B cell (primary cell): ENCODE measurements at regions of chr12 and their contacts with region 1.

Region 1: DNA sequence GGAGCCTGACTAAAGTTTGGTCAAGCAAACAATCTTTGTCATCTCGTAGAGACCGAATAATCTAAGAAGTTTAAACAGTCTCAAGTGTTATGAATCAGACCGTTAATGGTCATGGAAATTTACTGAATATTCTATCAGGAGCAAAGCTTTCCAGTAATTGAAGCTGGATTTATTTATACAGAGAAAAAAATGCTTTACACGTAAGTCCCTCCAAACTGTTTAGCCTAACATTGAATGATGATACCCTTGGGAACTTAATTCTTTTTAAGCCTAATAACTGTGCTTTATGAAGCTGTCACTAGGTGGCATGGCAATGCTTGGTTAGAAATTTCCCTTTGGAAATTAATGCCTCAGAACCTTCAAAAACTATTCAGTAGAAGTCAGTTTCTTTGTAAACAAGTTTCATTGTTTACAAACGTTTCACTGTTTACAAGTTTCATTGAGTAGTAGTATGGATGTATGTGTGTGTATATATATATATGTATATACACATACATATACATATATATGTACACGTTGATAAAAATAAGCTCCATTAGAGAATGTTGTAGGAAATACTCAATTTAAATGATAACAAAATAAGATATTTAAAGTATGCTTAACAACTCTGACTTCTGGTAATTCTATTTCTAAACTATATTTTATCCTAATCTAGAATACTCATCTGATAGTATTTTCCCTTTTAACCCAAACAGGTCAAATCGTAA is 32.1 kb downstream of the DEPDC4 start:
- DNase-seq: peak; percentile 34
- ATAC-seq: no peak
- H3K4me3 ChIP-seq: no peak overlapping the region
- H3K4me3 Mint-ChIP-seq: no peak overlapping the region
- H3K27ac ChIP-seq: no peak overlapping the region
- H3K27ac Mint-ChIP-seq: no peak overlapping the region
- H3K4me1 ChIP-seq: no peaks in the 10 kb centered on the region
- H3K4me1 Mint-ChIP-seq: no peaks in the 10 kb centered on the region
- H3K27me3 ChIP-seq: no peaks in the 10 kb centered on the region
- H3K27me3 Mint-ChIP-seq: no peaks in the 10 kb centered on the region
- CTCF ChIP-seq: peak; percentile 72

Region 2: GRCh38 chr12:100215209-100215608 is 19.5 kb before region 1 on chr12:
- CTCF ChIA-PET with region 1: no interaction called
- POLR2A ChIA-PET with region 1: no interaction called
- intact Hi-C with region 1: no loop called
- DNase-seq: no peak
- ATAC-seq: no peak
- H3K4me3 ChIP-seq: no peak overlapping the region
- H3K4me3 Mint-ChIP-seq: no peak overlapping the region
- H3K27ac ChIP-seq: no peak overlapping the region
- H3K27ac Mint-ChIP-seq: no peak overlapping the region
- H3K4me1 ChIP-seq: no peaks in the 10 kb centered on the region
- H3K4me1 Mint-ChIP-seq: peaks cover 3% of the 10 kb centered on the region
- H3K27me3 ChIP-seq: no peaks in the 10 kb centered on the region
- H3K27me3 Mint-ChIP-seq: no peaks in the 10 kb centered on the region
- CTCF ChIP-seq: no peak

Region 3: GRCh38 chr12:100672075-100672592 is 437.4 kb after region 1 on chr12:
- CTCF ChIA-PET with region 1: interaction called, 12 read pairs
- POLR2A ChIA-PET with region 1: no interaction called
- intact Hi-C with region 1: no loop called
- DNase-seq: peak; percentile 16
- ATAC-seq: no peak
- H3K4me3 ChIP-seq: no peak overlapping the region
- H3K4me3 Mint-ChIP-seq: no peak overlapping the region
- H3K27ac ChIP-seq: no peak overlapping the region
- H3K27ac Mint-ChIP-seq: no peak overlapping the region
- H3K4me1 ChIP-seq: no peaks in the 10 kb centered on the region
- H3K4me1 Mint-ChIP-seq: no peaks in the 10 kb centered on the region
- H3K27me3 ChIP-seq: no peaks in the 10 kb centered on the region
- H3K27me3 Mint-ChIP-seq: peaks cover 10% of the 10 kb centered on the region
- CTCF ChIP-seq: peak; percentile 54